GM12878 (cell line): ENCODE measurements at regions of chr7 and their contacts with region 1.

Region 1: GRCh38 chr7:82428186-82428961 is 15.2 kb downstream of the CACNA2D1 start:
- DNase-seq: no peak
- ATAC-seq: peak; percentile 50
- H3K4me3 ChIP-seq: no peak overlapping the region
- H3K27ac ChIP-seq: no peak overlapping the region
- H3K4me1 ChIP-seq: no peaks in the 10 kb centered on the region
- H3K27me3 ChIP-seq: no peaks in the 10 kb centered on the region
- CTCF ChIP-seq: no peak
- EP300 ChIP-seq: no peak
- POLR2A ChIP-seq: no peak
- RAD21 ChIP-seq: no peak

Region 2: DNA sequence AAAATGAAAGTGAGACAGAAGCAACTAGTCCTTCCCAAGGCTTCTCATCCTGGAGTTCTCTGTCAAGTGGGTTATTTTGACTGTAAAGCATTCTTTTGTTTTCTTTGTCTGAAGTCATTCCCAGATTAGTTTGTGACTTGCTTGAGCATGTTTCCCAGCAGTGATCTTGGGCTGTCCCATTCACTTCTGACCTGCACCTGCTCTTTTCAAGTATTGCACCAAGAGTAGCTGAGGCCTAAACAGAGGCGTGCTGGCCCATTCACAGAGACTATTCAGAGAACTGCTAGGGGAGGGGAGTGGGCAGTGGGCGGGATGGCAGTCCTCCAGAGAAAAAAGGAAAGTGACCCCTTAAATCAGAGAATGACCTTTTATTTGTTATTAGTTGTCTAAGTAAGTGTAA is 46.1 kb before region 1 on chr7:
- CTCF ChIA-PET with region 1: interaction called, 5 read pairs
- POLR2A ChIA-PET with region 1: interaction called, 20 read pairs
- RAD21 ChIA-PET with region 1: interaction called, 5 read pairs
- SMC1A ChIA-PET with region 1: interaction called, 22 read pairs
- in situ Hi-C with region 1: no loop called
- intact Hi-C with region 1: loop called (anchors 2 kb)
- DNase-seq: no peak
- ATAC-seq: no peak
- H3K4me3 ChIP-seq: no peak overlapping the region
- H3K27ac ChIP-seq: no peak overlapping the region
- H3K4me1 ChIP-seq: no peaks in the 10 kb centered on the region
- H3K27me3 ChIP-seq: no peaks in the 10 kb centered on the region
- CTCF ChIP-seq: no peak
- EP300 ChIP-seq: no peak
- POLR2A ChIP-seq: no peak
- RAD21 ChIP-seq: no peak

Region 3: DNA sequence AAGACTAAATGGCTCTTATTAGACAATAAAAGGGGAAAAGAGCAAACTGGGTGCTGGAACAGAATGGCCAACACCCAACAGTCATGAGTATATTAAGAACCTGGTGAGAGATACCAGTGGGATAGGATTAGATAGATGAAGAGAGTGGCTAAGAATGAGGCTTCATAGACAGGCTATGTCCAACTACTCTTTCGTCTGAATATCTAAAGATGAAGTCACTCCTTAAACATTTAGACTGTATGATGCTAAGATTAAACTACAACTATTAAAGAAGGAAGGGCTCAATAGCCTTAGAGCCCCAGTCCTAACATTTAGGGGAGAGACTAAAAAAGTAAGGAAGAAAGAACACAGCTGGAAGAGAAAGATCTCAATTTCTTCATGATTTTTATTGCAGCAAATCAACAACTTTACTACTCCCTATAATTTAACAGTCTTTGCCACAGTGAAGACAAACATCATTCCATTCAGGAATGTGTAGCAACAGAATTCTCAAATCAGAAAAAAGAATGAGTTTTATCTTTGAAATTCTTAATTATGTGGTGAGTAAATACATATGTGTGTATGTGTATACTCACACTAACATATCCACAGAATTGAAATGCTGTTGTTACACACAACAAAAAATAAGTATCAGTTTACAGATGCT is 30.4 kb before region 1 on chr7:
- CTCF ChIA-PET with region 1: no interaction called
- POLR2A ChIA-PET with region 1: interaction called, 3 read pairs
- RAD21 ChIA-PET with region 1: interaction called, 10 read pairs
- SMC1A ChIA-PET with region 1: interaction called, 14 read pairs
- in situ Hi-C with region 1: no loop called
- intact Hi-C with region 1: no loop called
- DNase-seq: no peak
- ATAC-seq: peak; percentile 42
- H3K4me3 ChIP-seq: no peak overlapping the region
- H3K27ac ChIP-seq: no peak overlapping the region
- H3K4me1 ChIP-seq: no peaks in the 10 kb centered on the region
- H3K27me3 ChIP-seq: no peaks in the 10 kb centered on the region
- CTCF ChIP-seq: no peak
- EP300 ChIP-seq: no peak
- POLR2A ChIP-seq: no peak
- RAD21 ChIP-seq: no peak

Region 4: DNA sequence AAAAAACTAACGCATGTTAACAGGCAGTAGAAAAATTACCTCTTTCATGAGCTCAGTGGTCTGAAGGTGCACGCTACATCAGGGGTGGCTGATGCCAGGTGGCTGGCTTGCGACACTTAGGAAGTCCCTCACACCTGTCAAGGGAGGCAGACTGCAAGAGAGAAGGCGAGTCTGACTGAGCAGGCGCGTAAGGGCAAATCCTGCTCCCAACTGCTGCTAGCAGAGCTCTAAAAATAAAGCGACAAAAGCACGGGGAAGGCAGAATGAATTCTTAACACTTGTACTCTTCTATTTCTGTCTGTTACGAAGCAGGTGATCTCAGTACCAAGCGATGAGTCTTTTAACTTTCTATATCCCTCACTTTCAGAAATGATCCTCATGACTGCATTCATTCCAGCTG is 17.9 kb before region 1 on chr7:
- CTCF ChIA-PET with region 1: interaction called, 6 read pairs
- POLR2A ChIA-PET with region 1: interaction called, 13 read pairs
- RAD21 ChIA-PET with region 1: interaction called, 34 read pairs
- SMC1A ChIA-PET with region 1: interaction called, 58 read pairs
- in situ Hi-C with region 1: no loop called
- intact Hi-C with region 1: no loop called
- DNase-seq: no peak
- ATAC-seq: peak; percentile 5; the same call in 1 of the 3 replicates
- H3K4me3 ChIP-seq: no peak overlapping the region
- H3K27ac ChIP-seq: no peak overlapping the region
- H3K4me1 ChIP-seq: no peaks in the 10 kb centered on the region
- H3K27me3 ChIP-seq: no peaks in the 10 kb centered on the region
- CTCF ChIP-seq: no peak
- EP300 ChIP-seq: no peak
- POLR2A ChIP-seq: no peak
- RAD21 ChIP-seq: no peak

Region 5: GRCh38 chr7:82438521-82438920 is 10.1 kb after region 1 on chr7:
- CTCF ChIA-PET with region 1: interaction called, 8 read pairs
- POLR2A ChIA-PET with region 1: interaction called, 4 read pairs
- RAD21 ChIA-PET with region 1: interaction called, 14 read pairs
- SMC1A ChIA-PET with region 1: interaction called, 13 read pairs
- in situ Hi-C with region 1: no loop called
- intact Hi-C with region 1: no loop called
- DNase-seq: no peak
- ATAC-seq: peak; percentile 32
- H3K4me3 ChIP-seq: no peak overlapping the region
- H3K27ac ChIP-seq: no peak overlapping the region
- H3K4me1 ChIP-seq: no peaks in the 10 kb centered on the region
- H3K27me3 ChIP-seq: peaks cover 2 to 6% of the 10 kb centered on the region in 2 experiments; a peak in 2 of 4 replicates
- CTCF ChIP-seq: no peak
- EP300 ChIP-seq: no peak
- POLR2A ChIP-seq: no peak
- RAD21 ChIP-seq: no peak